ENCODE measurements at regions of chr1 and their contacts with region 1.

Region 1: DNA sequence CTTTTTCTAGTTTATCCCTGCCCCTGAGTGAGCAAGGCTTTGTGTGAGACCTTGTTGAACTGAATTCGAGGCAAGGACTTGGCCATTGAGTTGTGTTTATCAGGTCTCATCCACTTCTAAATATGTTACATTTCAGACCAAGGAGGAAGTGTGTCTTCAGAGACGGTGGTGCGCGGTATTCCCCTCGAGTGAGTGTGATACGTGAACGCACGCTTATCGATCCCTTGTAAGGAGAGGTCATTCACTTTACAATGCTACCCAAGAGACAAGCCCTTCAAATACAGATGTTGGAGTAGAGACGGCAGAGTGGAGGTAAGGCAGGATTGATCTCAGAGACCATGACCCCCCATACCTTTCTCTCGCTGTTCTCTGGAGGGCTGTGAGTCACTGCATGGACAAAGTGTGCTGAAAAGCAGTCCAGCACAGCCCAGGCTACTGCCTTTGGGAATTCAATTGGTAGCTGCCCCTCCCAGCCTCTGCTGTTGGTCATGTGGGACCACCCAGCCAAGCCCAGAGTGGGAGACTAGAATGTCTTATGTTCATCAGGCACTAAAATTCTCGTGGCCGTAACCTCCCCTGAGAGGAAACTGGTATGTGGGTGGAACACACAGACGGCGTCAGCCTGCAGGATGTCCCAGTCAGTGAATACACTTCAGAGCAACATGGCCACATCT is 16.3 kb upstream of the MTARC1 start:
- DNase-seq: no peak
- H3K4me3 ChIP-seq: no peak overlapping the region
- H3K27ac ChIP-seq: no peak overlapping the region
- H3K4me1 ChIP-seq: peaks cover 7% of the 10 kb centered on the region
- H3K27me3 ChIP-seq: no peaks in the 10 kb centered on the region
- CTCF ChIP-seq: no peak
- EP300 ChIP-seq: no peak
- POLR2A ChIP-seq: no peak

Region 2: GRCh38 chr1:220696866-220697231 is 73.5 kb before region 1 on chr1:
- intact Hi-C with region 1: loop called in 2 of 4 experiments (anchors 5 kb)
- DNase-seq: no peak
- H3K4me3 ChIP-seq: no peak overlapping the region
- H3K27ac ChIP-seq: no peak overlapping the region
- H3K4me1 ChIP-seq: no peaks in the 10 kb centered on the region
- H3K27me3 ChIP-seq: no peaks in the 10 kb centered on the region
- CTCF ChIP-seq: no peak
- EP300 ChIP-seq: no peak
- POLR2A ChIP-seq: no peak

Region 3: DNA sequence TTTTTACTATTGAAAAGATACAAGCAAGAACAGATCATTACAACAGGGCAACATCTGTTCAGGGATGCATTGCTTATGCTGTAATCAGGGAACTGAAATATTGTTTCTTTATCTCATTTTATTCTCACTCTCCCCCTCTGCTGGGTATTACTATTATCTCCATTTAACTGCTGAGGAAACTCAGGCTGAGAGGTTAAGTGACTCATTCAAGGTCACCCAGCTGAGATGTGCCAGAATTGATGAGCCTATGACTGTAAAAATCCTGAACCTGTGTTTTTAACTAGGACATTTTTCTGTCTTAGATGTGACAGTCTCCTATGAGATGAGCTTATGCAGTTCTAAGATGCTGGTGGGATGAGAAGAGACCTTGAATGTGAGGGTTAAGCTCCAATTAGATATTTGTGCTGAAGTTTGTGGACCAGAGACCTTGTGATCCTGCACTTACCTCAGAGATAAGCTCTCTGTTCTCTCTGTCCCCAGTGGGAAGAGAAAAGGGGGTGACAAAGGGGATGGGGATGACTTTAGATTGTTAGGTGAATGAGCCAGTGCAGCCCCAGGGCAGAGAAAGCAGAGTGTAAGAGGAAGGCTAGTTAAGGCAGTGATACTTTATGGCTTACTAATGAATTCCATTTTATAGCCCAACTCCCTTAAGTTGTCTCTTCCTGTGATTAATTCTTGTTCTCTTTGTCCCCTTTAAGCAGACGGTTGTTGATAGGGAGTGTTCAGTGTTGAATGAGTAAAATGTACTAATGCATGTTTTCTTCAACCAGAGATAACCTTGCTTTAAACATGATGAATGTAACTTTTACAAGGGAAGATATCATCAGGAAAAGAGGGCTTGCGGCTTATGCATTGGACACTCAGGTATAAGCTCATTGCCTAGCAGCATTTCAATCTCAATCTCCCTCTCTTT is 220.3 kb after region 1 on chr1:
- intact Hi-C with region 1: no loop called
- DNase-seq: no peak
- H3K4me3 ChIP-seq: no peak overlapping the region
- H3K27ac ChIP-seq: no peak overlapping the region
- H3K4me1 ChIP-seq: no peaks in the 10 kb centered on the region
- H3K27me3 ChIP-seq: no peaks in the 10 kb centered on the region
- CTCF ChIP-seq: no peak
- EP300 ChIP-seq: no peak
- POLR2A ChIP-seq: no peak